CD4-positive, alpha-beta memory T cell (primary cell): ENCODE measurements at regions of chr2 and their contacts with region 1.

Region 1: GRCh38 chr2:218406209-218406948 is 6.7 kb downstream of the CTDSP1 start:
- DNase-seq: peak; percentile 88 to 92 (median 91)
- H3K4me3 ChIP-seq: peak overlapping the region; percentile 34 to 63
- H3K4me3 Mint-ChIP-seq: peak overlapping the region; percentile 80 to 91 (median 87)
- H3K27ac ChIP-seq: peak overlapping the region; percentile 71
- H3K27ac Mint-ChIP-seq: peak overlapping the region; percentile 93 to 100 (median 96)
- H3K4me1 ChIP-seq: peaks cover 62% of the 10 kb centered on the region
- H3K4me1 Mint-ChIP-seq: peaks cover 32 to 67% (median 50%) of the 10 kb centered on the region in 4 donors
- H3K27me3 ChIP-seq: no peaks in the 10 kb centered on the region
- H3K27me3 Mint-ChIP-seq: no peaks in the 10 kb centered on the region

Region 2: DNA sequence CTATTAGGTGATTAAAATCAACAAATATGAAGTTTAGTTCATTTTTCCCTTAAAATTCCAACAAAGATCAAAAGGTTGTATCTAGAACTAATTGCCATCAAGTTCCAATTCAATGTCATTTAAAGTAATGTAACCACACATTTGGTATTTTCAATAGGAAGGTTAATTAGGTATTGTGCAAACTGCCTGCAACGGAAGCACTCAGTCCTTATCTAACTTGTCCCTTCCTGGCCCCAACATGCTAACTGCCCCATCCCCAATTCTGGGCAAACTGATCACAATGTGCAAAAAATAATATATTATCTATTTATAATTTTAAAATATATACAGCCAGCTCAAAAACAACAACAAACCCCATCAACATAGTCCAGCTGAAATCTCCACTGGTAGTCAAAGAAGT is 45.7 kb after region 1 on chr2:
- CTCF ChIA-PET with region 1: no interaction called
- POLR2A ChIA-PET with region 1: no interaction called
- intact Hi-C with region 1: loop called (anchors 5 kb)
- DNase-seq: no peak
- H3K4me3 ChIP-seq: no peak overlapping the region
- H3K4me3 Mint-ChIP-seq: no peak overlapping the region
- H3K27ac ChIP-seq: no peak overlapping the region
- H3K27ac Mint-ChIP-seq: no peak overlapping the region
- H3K4me1 ChIP-seq: no peaks in the 10 kb centered on the region
- H3K4me1 Mint-ChIP-seq: peaks cover 0 to 3% (median under 1%) of the 10 kb centered on the region in 4 donors
- H3K27me3 ChIP-seq: no peaks in the 10 kb centered on the region
- H3K27me3 Mint-ChIP-seq: no peaks in the 10 kb centered on the region

Region 3: DNA sequence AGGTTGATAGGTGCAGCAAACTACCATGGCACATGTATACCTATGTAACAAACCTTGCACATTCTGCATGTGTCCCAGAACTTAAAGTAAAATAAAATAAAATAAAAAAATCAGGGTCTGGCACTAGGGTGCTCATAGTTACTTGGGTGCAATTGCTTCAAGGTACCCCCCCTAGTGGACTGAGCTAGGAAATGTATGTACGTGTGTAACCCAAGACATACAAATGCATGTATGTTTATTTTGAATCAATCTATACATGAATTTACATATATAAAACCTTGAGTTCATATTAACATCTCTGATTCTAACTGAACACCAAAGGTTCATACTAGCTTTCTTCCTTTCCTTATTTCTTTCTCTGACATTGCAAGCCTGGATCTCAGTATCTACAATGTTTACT is 110.2 kb after region 1 on chr2:
- CTCF ChIA-PET with region 1: interaction called, 5 read pairs
- POLR2A ChIA-PET with region 1: interaction called, 3 read pairs
- intact Hi-C with region 1: loop called (anchors 1 kb)
- DNase-seq: peak; percentile 20 to 37 (median 28)
- H3K4me3 ChIP-seq: no peak overlapping the region
- H3K4me3 Mint-ChIP-seq: no peak overlapping the region
- H3K27ac ChIP-seq: no peak overlapping the region
- H3K27ac Mint-ChIP-seq: peak overlapping the region in 2 of 7 donors; percentile 8 to 57
- H3K4me1 ChIP-seq: no peaks in the 10 kb centered on the region
- H3K4me1 Mint-ChIP-seq: peaks cover 0 to 26% (median 10%) of the 10 kb centered on the region in 4 donors
- H3K27me3 ChIP-seq: no peaks in the 10 kb centered on the region
- H3K27me3 Mint-ChIP-seq: no peaks in the 10 kb centered on the region

Region 4: GRCh38 chr2:218648088-218648786 is 241.9 kb after region 1 on chr2:
- CTCF ChIA-PET with region 1: interaction called, 3 read pairs
- POLR2A ChIA-PET with region 1: no interaction called
- intact Hi-C with region 1: loop called (anchors 1 kb)
- DNase-seq: peak in 4 of 5 donors; percentile 42 to 52 (median 48)
- H3K4me3 ChIP-seq: no peak overlapping the region
- H3K4me3 Mint-ChIP-seq: no peak overlapping the region
- H3K27ac ChIP-seq: no peak overlapping the region
- H3K27ac Mint-ChIP-seq: peak overlapping the region in 2 of 7 donors; percentile 54 to 67
- H3K4me1 ChIP-seq: peaks cover 6% of the 10 kb centered on the region
- H3K4me1 Mint-ChIP-seq: peaks cover 6 to 13% (median 11%) of the 10 kb centered on the region in 4 donors
- H3K27me3 ChIP-seq: no peaks in the 10 kb centered on the region
- H3K27me3 Mint-ChIP-seq: no peaks in the 10 kb centered on the region

Region 5: GRCh38 chr2:218671654-218672566 is 265.5 kb after region 1 on chr2 and contains the starts of genes RNF25 and STK36:
- CTCF ChIA-PET with region 1: no interaction called
- POLR2A ChIA-PET with region 1: no interaction called
- intact Hi-C with region 1: loop called (anchors 1 kb)
- DNase-seq: peak; percentile 78 to 88 (median 81)
- H3K4me3 ChIP-seq: peak within 1 kb of the TSS; percentile 77 to 97
- H3K4me3 Mint-ChIP-seq: peak within 1 kb of the TSS; percentile 95 to 98 (median 96)
- H3K27ac ChIP-seq: peak within 1 kb of the TSS; percentile 81
- H3K27ac Mint-ChIP-seq: peak within 1 kb of the TSS; percentile 89 to 98 (median 98)
- H3K4me1 ChIP-seq: peaks cover 18% of the 10 kb centered on the region
- H3K4me1 Mint-ChIP-seq: peaks cover 13 to 26% (median 19%) of the 10 kb centered on the region in 4 donors
- H3K27me3 ChIP-seq: no peaks in the 10 kb centered on the region
- H3K27me3 Mint-ChIP-seq: no peaks in the 10 kb centered on the region
- total RNA-seq, gene RNF25: 28.6 to 32.9 TPM
- total RNA-seq, gene STK36: 25.8 to 27.3 TPM